ENCODE measurements at regions of chr16 and their contacts with region 1.

Region 1: DNA sequence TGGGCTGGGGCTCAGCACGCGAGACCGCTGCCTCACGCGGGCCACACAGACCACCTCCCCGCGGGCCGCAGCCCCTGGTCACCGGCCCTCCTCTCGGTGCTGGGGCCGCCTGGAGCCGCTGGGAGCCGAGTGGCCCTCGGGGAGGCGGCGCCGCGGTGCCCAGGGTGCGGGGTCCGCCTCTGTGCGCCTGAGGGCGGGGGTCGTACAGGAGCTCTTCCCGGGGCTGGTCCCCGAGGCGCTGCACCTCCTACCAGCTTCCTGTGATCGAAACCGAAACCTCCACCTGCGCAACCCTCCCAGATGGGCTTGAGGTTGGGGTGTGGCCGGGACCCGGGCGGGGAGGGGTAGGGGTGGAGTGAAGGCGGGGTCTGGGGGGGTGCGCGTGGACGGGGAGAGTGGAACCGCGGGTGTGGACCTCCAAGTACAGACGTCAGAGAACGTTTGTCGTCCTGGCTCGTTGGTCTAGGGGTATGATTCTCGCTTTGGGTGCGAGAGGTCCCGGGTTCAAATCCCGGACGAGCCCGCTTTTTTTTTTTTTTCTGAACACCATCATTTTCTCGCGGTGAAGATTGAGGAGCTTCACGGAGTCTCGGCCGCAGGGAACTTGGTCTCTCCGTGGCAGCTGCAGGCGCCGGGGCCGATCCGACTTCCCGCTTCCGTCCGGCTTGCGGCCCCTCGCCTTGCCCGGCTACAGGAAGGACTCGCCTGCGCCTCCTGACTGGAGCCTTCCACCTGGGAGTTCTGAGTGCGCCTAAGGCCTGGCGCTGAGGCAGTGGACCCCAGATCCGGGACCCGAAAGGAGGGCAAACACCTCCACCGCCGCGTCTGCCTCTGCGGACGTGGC is 23.9 kb downstream of the ZNF213 start:
- DNase-seq: peak; percentile 84
- H3K4me3 ChIP-seq: peak overlapping the region; percentile 70 to 82 (median 76)
- H3K27ac ChIP-seq: peak overlapping the region; percentile 76
- H3K4me1 ChIP-seq: peaks cover 17% of the 10 kb centered on the region
- H3K27me3 ChIP-seq: no peaks in the 10 kb centered on the region
- CTCF ChIP-seq: no peak
- POLR2A ChIP-seq: no peak

Region 2: DNA sequence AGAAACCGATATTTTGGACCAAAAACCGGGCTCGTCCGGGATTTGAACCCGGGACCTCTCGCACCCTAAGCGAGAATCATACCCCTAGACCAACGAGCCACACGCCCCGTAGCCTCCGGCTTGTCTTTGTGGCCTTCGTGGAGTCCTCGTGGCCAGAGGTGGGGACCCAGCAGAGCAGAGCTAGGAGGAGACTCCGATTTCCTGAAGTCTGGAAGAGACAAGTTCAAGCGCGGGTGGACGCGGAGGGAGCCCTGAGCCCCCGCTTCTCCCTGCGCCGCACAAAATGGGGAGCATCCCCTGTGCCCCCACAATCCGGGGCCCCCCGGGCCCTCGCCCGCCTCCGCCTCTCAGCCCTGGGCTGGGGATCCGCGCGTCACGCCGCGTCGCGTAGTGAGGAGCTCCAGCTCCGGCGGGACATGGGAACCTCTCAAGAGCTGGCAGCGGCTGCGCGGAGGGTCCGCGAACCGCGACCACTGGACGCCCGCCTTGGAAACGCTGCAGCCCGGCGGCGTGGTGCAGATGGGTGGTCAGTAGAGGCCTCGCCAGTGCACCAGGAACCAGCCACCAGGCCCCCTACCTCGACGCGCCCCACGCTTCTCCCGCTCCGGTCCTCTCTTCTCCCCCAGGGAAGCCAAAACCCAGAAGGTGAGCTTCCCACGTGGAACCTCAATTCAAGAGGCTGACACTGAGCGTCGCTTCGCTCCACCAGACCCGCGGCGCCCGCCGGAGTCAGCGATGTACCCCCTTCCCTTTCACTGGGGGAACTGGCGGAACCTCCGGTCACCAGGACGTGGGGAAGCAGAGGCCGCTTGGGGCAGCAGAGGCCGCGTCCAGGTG is 24.1 kb after region 1 on chr16:
- CTCF ChIA-PET with region 1: no interaction called
- POLR2A ChIA-PET with region 1: no interaction called
- dilution Hi-C with region 1: no loop called
- intact Hi-C with region 1: loop called (anchors 2 kb)
- DNase-seq: peak; percentile 45
- H3K4me3 ChIP-seq: peak overlapping the region; percentile 36 to 79 (median 67)
- H3K27ac ChIP-seq: no peak overlapping the region
- H3K4me1 ChIP-seq: peaks cover 15% of the 10 kb centered on the region
- H3K27me3 ChIP-seq: peaks cover 10% of the 10 kb centered on the region in 2 experiments
- CTCF ChIP-seq: peak in 1 of 2 donors; percentile 51
- POLR2A ChIP-seq: no peak

Measured in endothelial cell of umbilical vein (primary cell).